KBM-7 (cell line): ENCODE measurements at regions of chr5 and their contacts with region 1.

Region 1: DNA sequence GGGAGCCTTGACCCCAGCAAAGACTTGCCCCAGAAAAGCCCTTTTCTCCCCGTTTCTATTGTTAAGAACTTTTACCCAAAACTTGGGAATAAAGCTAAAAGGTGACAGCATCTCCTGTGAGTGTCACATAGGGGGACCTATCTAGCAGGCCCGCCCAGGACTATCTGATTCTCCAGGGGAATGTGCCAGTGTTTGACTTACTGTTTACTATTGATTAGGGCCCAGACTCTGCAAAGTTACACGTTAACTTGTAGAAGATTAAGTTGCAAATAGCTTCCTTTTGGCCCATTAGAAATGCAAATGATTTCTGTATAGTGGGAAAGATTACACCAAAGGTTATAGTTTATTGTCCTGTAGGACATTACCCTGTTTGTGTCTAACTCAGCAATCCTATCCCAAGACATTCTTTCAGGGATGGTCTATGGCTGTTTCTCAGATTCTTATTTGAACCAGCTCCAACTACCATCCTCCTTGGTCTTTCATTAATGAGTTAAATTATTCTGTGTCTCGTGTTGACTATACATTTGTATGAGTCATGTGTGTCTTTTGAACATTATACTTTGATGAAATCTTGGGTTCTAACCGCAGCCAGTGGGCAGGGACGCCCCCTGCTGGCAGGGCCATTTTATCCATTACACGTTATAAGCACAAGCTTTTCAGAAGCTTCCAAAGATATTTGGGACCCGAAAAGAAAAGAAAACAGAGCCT is 60.7 kb downstream of the HRH2 start:
- DNase-seq: peak; percentile 66

Region 2: DNA sequence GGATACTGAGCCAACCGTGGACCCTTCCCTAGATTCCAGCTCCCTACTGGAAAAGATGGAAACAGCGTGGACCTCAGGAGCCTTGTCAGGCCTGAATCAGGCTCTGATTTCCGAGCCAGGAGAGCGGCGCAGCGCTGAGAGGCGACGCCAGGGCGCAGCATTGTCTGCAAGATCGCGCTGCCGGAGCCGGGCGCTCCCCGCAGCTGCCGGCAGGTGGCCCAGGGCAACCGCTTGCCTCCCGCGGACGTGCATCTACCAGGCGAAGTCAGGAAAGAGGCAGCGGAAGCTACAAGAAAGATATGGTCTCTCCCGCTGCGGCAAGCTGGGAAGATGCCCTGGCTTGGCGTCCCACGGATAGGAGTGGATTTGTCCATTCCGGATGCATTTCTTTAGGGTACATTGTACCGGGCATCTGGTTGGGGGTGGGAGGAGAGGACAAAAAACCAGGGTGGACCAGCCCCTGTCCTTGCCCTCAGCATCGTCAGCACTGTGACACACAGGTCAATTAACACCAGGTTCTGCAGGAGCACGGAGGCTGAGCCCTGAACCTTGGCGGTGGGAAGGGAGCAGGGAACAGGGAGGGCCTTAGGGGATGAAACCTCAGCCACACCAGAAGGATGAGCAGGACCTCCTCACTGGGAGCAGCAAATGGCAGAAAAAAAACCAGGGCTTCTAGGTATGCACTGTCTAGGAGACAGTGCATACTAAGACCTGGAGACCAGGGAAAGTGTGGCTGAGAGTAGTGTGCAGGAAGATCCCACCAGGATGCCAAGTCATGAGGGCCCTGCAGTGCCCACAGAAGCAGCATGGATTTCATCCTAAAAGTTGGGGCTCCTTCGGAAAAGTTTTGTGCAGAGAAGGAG is 184.3 kb before region 1 on chr5:
- in situ Hi-C with region 1: loop called (anchors 10 kb)
- DNase-seq: peak; percentile 86

Region 3: DNA sequence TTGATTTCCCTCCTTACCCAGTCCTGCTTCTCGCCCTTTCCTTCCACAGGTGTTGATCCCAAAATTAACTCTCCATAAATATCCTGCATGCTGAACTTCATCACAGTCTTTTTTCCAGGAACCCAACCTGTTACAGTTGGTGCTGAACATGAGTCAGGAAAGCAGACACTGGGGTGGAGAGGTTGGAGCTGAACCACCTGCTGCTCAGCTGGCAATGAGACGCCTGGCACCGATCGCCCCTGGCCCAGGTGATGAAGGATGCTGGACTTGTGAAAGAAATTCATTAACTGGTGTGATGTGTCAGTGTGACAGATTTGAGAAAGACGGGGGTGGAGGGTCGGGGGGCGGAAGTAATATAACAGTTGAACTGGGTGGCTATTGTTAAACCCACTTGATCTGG is 183.5 kb after region 1 on chr5:
- in situ Hi-C with region 1: no loop called
- DNase-seq: no peak